ENCODE measurements at regions of chr7 and their contacts with region 1.

Region 1: DNA sequence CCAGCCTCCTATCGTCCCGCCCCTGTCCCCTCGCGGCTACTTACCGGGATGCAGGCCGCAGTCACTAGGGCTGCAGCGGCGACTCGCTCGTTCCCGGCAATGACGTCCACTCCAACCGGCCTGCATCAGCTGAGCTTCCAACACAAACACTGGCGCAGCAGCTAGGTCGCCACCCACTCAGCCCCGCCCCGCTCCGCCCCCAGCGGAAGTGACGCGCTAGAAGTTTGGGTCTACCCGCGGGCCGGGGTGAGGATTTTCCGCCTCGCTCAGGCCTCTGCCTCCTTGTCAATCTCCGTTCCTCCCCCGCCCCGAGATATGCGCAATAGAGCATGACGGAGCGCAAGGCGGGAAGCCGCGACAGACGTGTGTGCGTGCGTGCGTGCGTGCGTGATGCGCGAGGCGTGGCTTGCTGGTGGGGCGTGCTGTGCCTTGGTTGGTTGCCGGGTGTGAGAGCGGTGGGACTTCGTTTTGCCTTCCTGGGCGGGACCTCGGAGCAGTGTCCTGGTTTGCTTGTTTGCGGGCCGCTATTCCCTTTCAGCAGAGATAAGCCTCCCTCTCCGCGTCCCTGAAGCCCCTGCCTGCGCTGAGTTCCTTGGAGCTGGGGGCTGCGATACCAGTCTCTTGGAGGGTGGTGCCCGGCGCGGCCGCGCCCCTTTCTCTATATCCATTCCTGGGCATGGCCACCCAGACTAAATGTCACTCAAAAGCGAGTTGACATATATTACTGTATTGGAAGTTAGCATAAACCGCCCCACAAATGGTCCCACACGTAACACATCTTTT is at the start of gene PNPLA8:
- DNase-seq: peak; percentile 98 to 100
- H3K4me3 ChIP-seq: peak within 1 kb of the TSS; percentile 68
- H3K27ac ChIP-seq: peak within 1 kb of the TSS; percentile 96
- H3K4me1 ChIP-seq: peaks cover 56% of the 10 kb centered on the region
- H3K27me3 ChIP-seq: no peaks in the 10 kb centered on the region
- CTCF ChIP-seq: no peak
- total RNA-seq, gene PNPLA8: 15.6 and 31.3 TPM in 2 replicates

Region 2: GRCh38 chr7:107939573-107940489 is 586.3 kb before region 1 on chr7:
- CTCF ChIA-PET with region 1: no interaction called
- POLR2A ChIA-PET with region 1: no interaction called
- intact Hi-C with region 1: loop called (anchors 10 kb)
- DNase-seq: no peak
- H3K4me3 ChIP-seq: no peak overlapping the region
- H3K27ac ChIP-seq: no peak overlapping the region
- H3K4me1 ChIP-seq: no peaks in the 10 kb centered on the region
- H3K27me3 ChIP-seq: no peaks in the 10 kb centered on the region
- CTCF ChIP-seq: no peak

Region 3: GRCh38 chr7:108581639-108582491 is 55.7 kb after region 1 on chr7:
- CTCF ChIA-PET with region 1: no interaction called
- POLR2A ChIA-PET with region 1: interaction called, 7 read pairs
- intact Hi-C with region 1: loop called (anchors 1 kb)
- DNase-seq: peak; percentile 53 to 73
- H3K4me3 ChIP-seq: peak overlapping the region; percentile 8; the same call in 1 of the 2 replicates
- H3K27ac ChIP-seq: peak overlapping the region; percentile 58
- H3K4me1 ChIP-seq: peaks cover 16% of the 10 kb centered on the region
- H3K27me3 ChIP-seq: no peaks in the 10 kb centered on the region
- CTCF ChIP-seq: no peak